AG04449 (cell line): ENCODE measurements at regions of chr15 and their contacts with region 1.

Region 1: DNA sequence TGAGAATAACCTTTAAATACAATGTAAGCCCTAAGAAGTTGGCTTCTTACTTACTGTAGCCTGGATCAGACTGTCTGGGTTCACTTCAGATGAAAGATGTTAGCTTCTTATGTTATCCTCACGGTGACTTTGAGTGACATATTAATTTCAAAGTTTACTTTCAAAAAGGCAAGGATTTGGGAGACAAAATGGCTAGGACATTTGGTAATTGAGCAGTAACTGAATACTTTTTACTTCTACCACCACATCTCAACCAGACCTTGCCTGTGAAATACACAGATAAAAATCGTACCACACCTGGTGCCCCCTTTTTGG is 36.0 kb upstream of the BNIP2 start:
- DNase-seq: no peak
- H3K4me3 ChIP-seq: no peak overlapping the region
- CTCF ChIP-seq: no peak

Region 2: GRCh38 chr15:59688841-59689625 is 36.1 kb before region 1 on chr15 and contains the start of gene BNIP2:
- CTCF ChIA-PET with region 1: interaction called, 10 read pairs
- POLR2A ChIA-PET with region 1: no interaction called
- DNase-seq: peak; percentile 83
- H3K4me3 ChIP-seq: peak within 1 kb of the TSS; percentile 96
- CTCF ChIP-seq: no peak

Region 3: DNA sequence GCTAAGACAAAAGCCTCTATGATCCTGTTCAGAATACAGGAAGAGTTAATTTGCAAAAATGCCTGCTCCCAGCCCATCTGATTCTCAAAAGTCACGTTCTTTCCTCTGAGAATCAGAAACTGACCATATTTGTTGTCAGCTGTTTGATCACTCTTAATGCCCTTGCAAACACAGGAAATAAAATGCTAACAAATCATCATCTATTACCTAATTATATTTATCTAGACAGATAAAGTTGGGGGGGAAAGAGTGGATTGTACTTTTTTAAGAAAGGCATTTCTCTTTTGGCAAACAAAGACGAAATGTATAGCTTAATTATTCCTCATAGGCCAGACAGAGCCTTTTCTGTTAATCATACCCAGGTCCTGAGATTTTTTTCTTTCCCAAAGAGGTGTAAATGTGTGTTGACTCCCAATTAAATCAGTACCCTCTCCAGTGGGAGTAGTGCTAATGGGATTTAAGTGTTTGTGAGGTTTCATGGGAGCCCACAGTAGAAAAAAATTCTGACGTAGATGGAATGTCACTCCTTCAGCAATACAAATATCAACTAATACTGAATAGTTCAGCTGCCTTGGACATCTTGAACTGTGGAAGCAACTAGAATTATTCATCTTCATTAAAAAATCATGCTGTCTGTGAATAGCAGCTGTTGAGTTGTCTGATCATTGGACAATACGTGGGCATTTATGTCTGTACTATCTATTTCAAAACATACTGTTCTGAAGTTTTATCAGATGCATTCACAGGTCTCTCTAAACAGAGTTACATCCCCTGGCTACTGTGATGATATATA is 13.5 kb before region 1 on chr15:
- CTCF ChIA-PET with region 1: interaction called, 16 read pairs
- POLR2A ChIA-PET with region 1: no interaction called
- DNase-seq: no peak
- H3K4me3 ChIP-seq: no peak overlapping the region
- CTCF ChIP-seq: no peak

Region 4: GRCh38 chr15:60128000-60128376 is 402.9 kb after region 1 on chr15:
- CTCF ChIA-PET with region 1: interaction called, 11 read pairs
- POLR2A ChIA-PET with region 1: no interaction called
- DNase-seq: no peak
- H3K4me3 ChIP-seq: peak overlapping the region; percentile 63
- CTCF ChIP-seq: no peak

Region 5: GRCh38 chr15:60179786-60180391 is 454.8 kb after region 1 on chr15:
- CTCF ChIA-PET with region 1: interaction called, 23 read pairs
- POLR2A ChIA-PET with region 1: no interaction called
- DNase-seq: peak; percentile 9
- H3K4me3 ChIP-seq: no peak overlapping the region
- CTCF ChIP-seq: peak; percentile 68

Region 6: GRCh38 chr15:60326824-60327654 is 601.9 kb after region 1 on chr15:
- CTCF ChIA-PET with region 1: interaction called, 224 read pairs
- POLR2A ChIA-PET with region 1: no interaction called
- DNase-seq: no peak
- H3K4me3 ChIP-seq: no peak overlapping the region
- CTCF ChIP-seq: peak; percentile 69